SK-N-SH (cell line): ENCODE measurements at regions of chr2 and their contacts with region 1.

Region 1: GRCh38 chr2:73156539-73157124 is 43.9 kb upstream of the RAB11FIP5 start:
- DNase-seq: peak; percentile 83
- H3K4me3 ChIP-seq: peak overlapping the region; percentile 6 to 49; a peak in 1 of 4 replicates
- H3K27ac ChIP-seq: no peak overlapping the region
- H3K4me1 ChIP-seq: peaks cover 0 to 5% of the 10 kb centered on the region in 2 experiments; a peak in 1 of 4 replicates
- H3K27me3 ChIP-seq: no peaks in the 10 kb centered on the region
- CTCF ChIP-seq: peak; percentile 87
- EP300 ChIP-seq: no peak
- RAD21 ChIP-seq: peak; percentile 92

Region 2: GRCh38 chr2:72985895-72986683 is 170.5 kb before region 1 on chr2:
- CTCF ChIA-PET with region 1: interaction called, 11 read pairs
- POLR2A ChIA-PET with region 1: no interaction called
- DNase-seq: peak; percentile 74
- H3K4me3 ChIP-seq: no peak overlapping the region
- H3K27ac ChIP-seq: peak overlapping the region in 1 of 2 experiments; percentile 67; a peak in 2 of 4 replicates
- H3K4me1 ChIP-seq: peaks cover 0 to 53% of the 10 kb centered on the region in 2 experiments; a peak in 2 of 4 replicates
- H3K27me3 ChIP-seq: no peaks in the 10 kb centered on the region
- CTCF ChIP-seq: no peak
- EP300 ChIP-seq: no peak; a peak in 1 of 4 replicates
- RAD21 ChIP-seq: no peak; the same call in 1 of the 2 replicates

Region 3: DNA sequence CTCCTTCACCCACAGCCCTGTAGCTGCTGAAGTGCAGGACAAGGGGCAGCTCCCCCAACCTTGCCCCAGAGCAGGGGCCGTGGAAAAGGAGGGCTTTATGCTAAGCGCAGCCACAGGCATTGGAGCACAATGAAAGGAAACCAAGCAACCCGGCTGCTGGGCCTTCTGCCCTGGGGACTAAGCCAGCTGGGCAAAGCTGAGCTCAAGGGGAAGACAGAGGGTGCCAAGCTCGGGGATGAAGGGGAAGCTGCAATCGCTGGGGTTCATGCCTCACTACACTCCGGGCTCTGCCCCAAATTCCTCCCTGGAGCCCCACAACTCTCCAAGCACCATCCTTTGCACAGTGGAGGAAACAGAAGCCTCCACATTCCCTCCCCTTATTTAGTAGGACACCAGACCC is 97.5 kb before region 1 on chr2:
- CTCF ChIA-PET with region 1: interaction called, 10 read pairs
- POLR2A ChIA-PET with region 1: no interaction called
- DNase-seq: no peak
- H3K4me3 ChIP-seq: no peak overlapping the region
- H3K27ac ChIP-seq: no peak overlapping the region
- H3K4me1 ChIP-seq: peaks cover 3 to 16% of the 10 kb centered on the region in 2 experiments; a peak in 3 of 4 replicates
- H3K27me3 ChIP-seq: no peaks in the 10 kb centered on the region
- CTCF ChIP-seq: no peak
- EP300 ChIP-seq: no peak
- RAD21 ChIP-seq: no peak

Region 4: GRCh38 chr2:73085691-73086360 is 70.8 kb before region 1 on chr2:
- CTCF ChIA-PET with region 1: interaction called, 267 read pairs
- POLR2A ChIA-PET with region 1: no interaction called
- DNase-seq: peak; percentile 88
- H3K4me3 ChIP-seq: peak overlapping the region in 1 of 2 experiments; percentile 46; a peak in 1 of 4 replicates
- H3K27ac ChIP-seq: no peak overlapping the region
- H3K4me1 ChIP-seq: peaks cover 2 to 22% of the 10 kb centered on the region in 2 experiments; a peak in 2 of 4 replicates
- H3K27me3 ChIP-seq: no peaks in the 10 kb centered on the region
- CTCF ChIP-seq: peak; percentile 97
- EP300 ChIP-seq: no peak
- RAD21 ChIP-seq: peak; percentile 96

Region 5: GRCh38 chr2:73134471-73134870 is 22.2 kb before region 1 on chr2:
- CTCF ChIA-PET with region 1: interaction called, 16 read pairs
- POLR2A ChIA-PET with region 1: no interaction called
- DNase-seq: no peak
- H3K4me3 ChIP-seq: no peak overlapping the region
- H3K27ac ChIP-seq: no peak overlapping the region
- H3K4me1 ChIP-seq: no peaks in the 10 kb centered on the region; a peak in 1 of 4 replicates
- H3K27me3 ChIP-seq: no peaks in the 10 kb centered on the region; the same call in 1 of the 2 replicates
- CTCF ChIP-seq: no peak
- EP300 ChIP-seq: no peak
- RAD21 ChIP-seq: no peak

Region 6: DNA sequence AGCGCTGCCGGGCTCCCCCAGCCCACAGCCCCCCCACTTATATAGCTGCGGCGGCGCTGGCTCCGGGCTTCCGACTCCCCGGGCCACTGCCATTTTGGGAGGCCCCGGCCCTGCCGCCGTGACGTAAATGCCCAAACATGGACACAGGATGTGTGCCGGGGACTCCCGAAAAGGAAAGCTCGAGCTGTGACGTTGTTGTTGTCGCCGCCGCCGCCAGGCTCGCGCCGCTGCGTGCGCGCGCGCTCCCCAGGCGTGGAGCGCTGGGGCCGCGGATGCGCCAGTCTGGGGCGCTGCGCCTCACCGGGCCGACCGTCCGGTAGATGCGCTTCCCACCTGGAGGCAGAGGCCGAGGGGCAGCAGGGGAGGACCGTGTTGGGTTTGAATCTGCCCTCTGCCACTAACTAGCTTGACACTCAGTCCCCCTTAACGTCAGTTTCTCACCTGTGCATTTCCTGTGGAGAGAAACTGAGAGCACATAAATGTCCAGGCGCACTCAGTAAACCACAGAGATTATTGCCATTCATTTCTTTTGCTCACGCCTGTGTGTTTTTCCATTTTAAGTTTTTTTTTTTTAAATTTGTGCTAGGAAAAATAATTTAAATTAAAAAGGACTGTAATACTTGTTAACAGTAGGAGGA is 137.0 kb after region 1 on chr2 and contains the start of gene EGR4:
- CTCF ChIA-PET with region 1: no interaction called
- POLR2A ChIA-PET with region 1: no interaction called
- DNase-seq: peak; percentile 93
- H3K4me3 ChIP-seq: peak within 1 kb of the TSS; percentile 51 to 62
- H3K27ac ChIP-seq: no peak within 1 kb of the TSS
- H3K4me1 ChIP-seq: peaks cover 0 to 15% of the 10 kb centered on the region in 2 experiments; a peak in 1 of 4 replicates
- H3K27me3 ChIP-seq: peaks cover 54% of the 10 kb centered on the region
- CTCF ChIP-seq: no peak
- EP300 ChIP-seq: no peak
- RAD21 ChIP-seq: no peak
- polyA plus RNA-seq, gene EGR4: 0.02 TPM in 1 of 2 replicates, not detected in the other

Region 7: GRCh38 chr2:73877071-73877802 is 720.6 kb after region 1 on chr2:
- CTCF ChIA-PET with region 1: no interaction called
- POLR2A ChIA-PET with region 1: no interaction called
- DNase-seq: no peak
- H3K4me3 ChIP-seq: no peak overlapping the region
- H3K27ac ChIP-seq: no peak overlapping the region
- H3K4me1 ChIP-seq: no peaks in the 10 kb centered on the region
- H3K27me3 ChIP-seq: no peaks in the 10 kb centered on the region
- CTCF ChIP-seq: no peak
- EP300 ChIP-seq: no peak
- RAD21 ChIP-seq: no peak